MCF 10A (cell line): ENCODE measurements at regions of chr4 and their contacts with region 1.

Region 1: DNA sequence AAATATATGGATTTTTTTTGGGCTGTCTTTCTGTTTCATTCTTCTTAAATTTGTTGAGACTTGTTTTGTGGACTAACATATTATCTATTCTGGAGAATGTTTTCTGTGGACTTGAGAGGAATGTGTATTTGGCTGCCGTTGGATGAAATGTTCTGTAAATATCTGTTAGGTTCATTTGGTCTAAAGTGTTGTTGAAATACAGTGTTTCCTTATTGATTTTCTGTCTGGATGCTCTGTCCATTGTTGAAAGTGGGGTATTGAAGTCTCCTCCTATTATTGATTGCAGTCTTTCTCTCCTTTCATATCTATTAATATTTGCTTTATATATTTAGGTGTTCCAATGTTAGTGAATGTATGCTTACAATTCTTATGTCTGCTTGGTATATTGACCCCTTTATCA is 431.8 kb downstream of the RAPGEF2 start:
- DNase-seq: no peak
- H3K4me3 Mint-ChIP-seq: no peak overlapping the region
- H3K27ac Mint-ChIP-seq: no peak overlapping the region
- H3K4me1 Mint-ChIP-seq: no peaks in the 10 kb centered on the region
- H3K27me3 Mint-ChIP-seq: no peaks in the 10 kb centered on the region
- CTCF ChIP-seq: no peak

Region 2: GRCh38 chr4:159562366-159562765 is 27.7 kb after region 1 on chr4:
- CTCF ChIA-PET with region 1: no interaction called
- POLR2A ChIA-PET with region 1: no interaction called
- intact Hi-C with region 1: loop called (anchors 1 kb)
- DNase-seq: no peak
- H3K4me3 Mint-ChIP-seq: no peak overlapping the region
- H3K27ac Mint-ChIP-seq: no peak overlapping the region
- H3K4me1 Mint-ChIP-seq: no peaks in the 10 kb centered on the region
- H3K27me3 Mint-ChIP-seq: no peaks in the 10 kb centered on the region
- CTCF ChIP-seq: no peak